ENCODE measurements at regions of chr1 and their contacts with region 1.

Region 1: GRCh38 chr1:156728597-156729462 is at the start of gene ISG20L2:
- DNase-seq: peak; percentile 94 to 96
- ATAC-seq: peak; percentile 95 to 97 (median 96)
- H3K4me3 ChIP-seq: peak within 1 kb of the TSS; percentile 57 to 86 (median 78)
- H3K27ac ChIP-seq: peak within 1 kb of the TSS; percentile 92 to 98 (median 95)
- H3K4me1 ChIP-seq: peaks cover 21 to 52% (median 44%) of the 10 kb centered on the region in 9 donors
- H3K27me3 ChIP-seq: no peaks in the 10 kb centered on the region
- CTCF ChIP-seq: no peak
- total RNA-seq, gene ISG20L2: 10.5 to 17.5 (median 15.2) TPM

Region 2: GRCh38 chr1:156659994-156660751 is 68.7 kb before region 1 on chr1:
- intact Hi-C with region 1: loop called in 1 of 10 experiments (anchors 1 kb)
- DNase-seq: peak; percentile 97 to 98
- ATAC-seq: peak; percentile 82 to 91 (median 85)
- H3K4me3 ChIP-seq: peak overlapping the region in 8 of 10 donors; percentile 18 to 46 (median 39)
- H3K27ac ChIP-seq: peak overlapping the region; percentile 68 to 99 (median 96)
- H3K4me1 ChIP-seq: peaks cover 54 to 85% (median 80%) of the 10 kb centered on the region in 9 donors
- H3K27me3 ChIP-seq: peaks cover 0 to 28% (median 18%) of the 10 kb centered on the region in 7 donors
- CTCF ChIP-seq: peak; percentile 93 to 100 (median 99)

Region 3: DNA sequence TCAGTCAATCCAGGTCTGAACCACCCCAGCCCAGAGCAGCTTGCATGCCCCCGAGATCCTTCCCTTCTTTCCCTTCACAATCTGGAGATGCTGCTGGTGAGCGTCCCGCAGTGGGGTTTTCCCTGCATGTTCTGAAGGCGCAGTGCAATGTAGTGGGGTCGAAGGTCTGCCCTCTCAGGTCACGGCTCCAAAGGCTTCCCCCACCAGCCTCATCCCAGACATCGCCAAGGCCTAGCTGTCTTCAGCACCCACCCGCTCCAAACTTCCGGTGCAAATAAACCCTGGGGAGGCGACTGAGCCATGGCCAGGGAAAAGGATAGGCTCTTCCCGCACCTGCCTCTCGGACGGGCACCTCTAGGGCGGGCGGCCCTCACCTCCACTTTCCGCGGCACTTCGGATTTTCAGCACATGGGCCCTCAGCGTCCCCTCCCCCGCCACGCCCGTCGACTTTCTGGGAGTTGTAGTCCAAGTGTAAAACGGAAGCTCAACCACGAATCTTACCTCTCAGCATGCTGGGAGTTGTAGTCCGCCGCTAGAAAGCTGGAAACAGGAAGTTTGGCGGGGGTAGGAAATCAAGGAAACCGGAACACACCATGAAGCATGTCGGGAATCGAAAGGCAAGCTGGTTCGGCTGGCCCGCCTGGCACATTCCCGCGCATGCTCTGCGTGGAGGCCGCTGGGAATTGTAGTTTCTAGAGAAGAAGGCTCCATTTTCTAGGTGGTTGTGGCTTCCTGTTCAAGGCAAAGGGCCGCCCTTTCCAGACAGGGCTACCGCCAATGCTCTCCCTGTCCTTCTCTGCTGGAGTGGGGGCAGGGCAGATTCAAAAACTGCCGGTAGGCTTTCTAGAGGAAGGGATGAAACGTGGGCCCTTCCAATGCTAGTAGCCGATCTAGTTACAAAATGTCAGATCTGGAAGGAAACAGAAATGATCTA is 12.1 kb after region 1 on chr1 and contains the start of gene MRPL24:
- intact Hi-C with region 1: loop called in 1 of 10 experiments (anchors 1 kb)
- DNase-seq: peak; percentile 96 to 99
- ATAC-seq: peak; percentile 89 to 97 (median 94)
- H3K4me3 ChIP-seq: peak within 1 kb of the TSS; percentile 33 to 87 (median 74)
- H3K27ac ChIP-seq: peak within 1 kb of the TSS; percentile 59 to 96 (median 88)
- H3K4me1 ChIP-seq: peaks cover 5 to 51% (median 29%) of the 10 kb centered on the region in 9 donors
- H3K27me3 ChIP-seq: no peaks in the 10 kb centered on the region
- CTCF ChIP-seq: no peak
- total RNA-seq, gene MRPL24: 70.3 to 105 (median 86.7) TPM

Region 4: GRCh38 chr1:156860113-156860627 is 131.3 kb after region 1 on chr1:
- intact Hi-C with region 1: loop called in 2 of 10 experiments (anchors 10 kb)
- DNase-seq: peak in 1 of 2 donors; percentile 61
- ATAC-seq: peak; percentile 66 to 85 (median 76)
- H3K4me3 ChIP-seq: peak overlapping the region in 9 of 10 donors; percentile 6 to 51 (median 43)
- H3K27ac ChIP-seq: no peak overlapping the region
- H3K4me1 ChIP-seq: peaks cover 3 to 36% (median 33%) of the 10 kb centered on the region in 9 donors
- H3K27me3 ChIP-seq: peaks cover 8 to 82% (median 60%) of the 10 kb centered on the region in 7 donors
- CTCF ChIP-seq: peak; percentile 66 to 94 (median 88)

Measured in heart right ventricle (tissue), 16 donors.